ENCODE measurements at regions of chr11 and their contacts with region 1.

Region 1: DNA sequence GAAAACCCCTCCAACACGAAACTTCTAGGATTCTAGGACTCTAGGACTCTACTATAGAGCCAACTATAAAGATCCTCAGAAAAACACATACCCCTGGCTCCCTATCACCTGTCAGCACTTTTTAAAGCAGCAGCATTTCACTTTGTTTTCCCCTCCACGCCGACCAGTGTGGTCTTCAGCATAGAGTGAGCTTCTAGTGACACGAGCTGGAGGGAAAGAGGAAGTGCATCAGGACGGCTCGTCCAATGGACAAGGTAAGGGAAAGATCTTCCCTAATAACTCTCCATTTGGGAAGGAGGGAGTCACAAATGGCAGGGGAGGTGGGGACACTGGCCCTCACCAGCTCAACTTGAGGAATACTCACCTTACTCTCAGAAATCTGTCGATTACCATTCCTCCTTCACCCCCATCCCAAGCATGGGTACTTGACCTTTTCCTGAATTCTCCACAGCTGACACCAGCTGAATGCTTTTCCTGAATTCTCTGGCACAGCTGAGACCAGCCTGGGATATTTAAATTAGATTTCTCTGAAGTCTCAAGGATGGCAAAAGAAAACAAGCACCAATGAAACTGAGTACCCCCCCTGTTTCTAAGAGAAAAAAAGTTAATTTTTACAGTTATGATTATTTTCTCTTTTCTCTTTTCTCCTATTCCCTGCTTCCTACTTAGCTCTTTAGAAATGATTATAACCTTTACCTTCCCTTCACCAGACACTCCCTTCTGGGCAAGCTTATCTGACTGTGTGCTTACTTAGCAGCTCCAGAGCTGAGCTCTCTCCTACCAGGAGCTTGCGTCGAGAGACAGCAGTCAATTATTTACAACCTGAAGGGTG is 33.3 kb upstream of the NNMT start:
- DNase-seq: no peak
- H3K4me3 ChIP-seq: no peak overlapping the region
- H3K27ac ChIP-seq: no peak overlapping the region
- H3K4me1 ChIP-seq: peaks cover 4 to 46% (median 38%) of the 10 kb centered on the region in 6 donors
- H3K27me3 ChIP-seq: peaks cover 0 to 32% (median 0%) of the 10 kb centered on the region in 7 donors
- CTCF ChIP-seq: peak; percentile 18 to 72 (median 63)
- POLR2A ChIP-seq: no peak

Region 2: GRCh38 chr11:113896156-113896879 is 366.6 kb before region 1 on chr11:
- intact Hi-C with region 1: loop called (anchors 5 kb)
- DNase-seq: no peak
- H3K4me3 ChIP-seq: no peak overlapping the region
- H3K27ac ChIP-seq: no peak overlapping the region
- H3K4me1 ChIP-seq: peaks cover 0 to 7% (median 1%) of the 10 kb centered on the region in 6 donors
- H3K27me3 ChIP-seq: no peaks in the 10 kb centered on the region
- CTCF ChIP-seq: peak; percentile 56 to 82 (median 72)
- POLR2A ChIP-seq: no peak

Region 3: GRCh38 chr11:113994077-113994954 is 268.6 kb before region 1 on chr11:
- intact Hi-C with region 1: loop called (anchors 5 kb)
- DNase-seq: peak; percentile 73
- H3K4me3 ChIP-seq: no peak overlapping the region
- H3K27ac ChIP-seq: no peak overlapping the region
- H3K4me1 ChIP-seq: peaks cover 0 to 7% (median 0%) of the 10 kb centered on the region in 6 donors
- H3K27me3 ChIP-seq: peaks cover 0 to 73% (median 0%) of the 10 kb centered on the region in 7 donors
- CTCF ChIP-seq: peak; percentile 37 to 86 (median 68)
- POLR2A ChIP-seq: no peak

Region 4: DNA sequence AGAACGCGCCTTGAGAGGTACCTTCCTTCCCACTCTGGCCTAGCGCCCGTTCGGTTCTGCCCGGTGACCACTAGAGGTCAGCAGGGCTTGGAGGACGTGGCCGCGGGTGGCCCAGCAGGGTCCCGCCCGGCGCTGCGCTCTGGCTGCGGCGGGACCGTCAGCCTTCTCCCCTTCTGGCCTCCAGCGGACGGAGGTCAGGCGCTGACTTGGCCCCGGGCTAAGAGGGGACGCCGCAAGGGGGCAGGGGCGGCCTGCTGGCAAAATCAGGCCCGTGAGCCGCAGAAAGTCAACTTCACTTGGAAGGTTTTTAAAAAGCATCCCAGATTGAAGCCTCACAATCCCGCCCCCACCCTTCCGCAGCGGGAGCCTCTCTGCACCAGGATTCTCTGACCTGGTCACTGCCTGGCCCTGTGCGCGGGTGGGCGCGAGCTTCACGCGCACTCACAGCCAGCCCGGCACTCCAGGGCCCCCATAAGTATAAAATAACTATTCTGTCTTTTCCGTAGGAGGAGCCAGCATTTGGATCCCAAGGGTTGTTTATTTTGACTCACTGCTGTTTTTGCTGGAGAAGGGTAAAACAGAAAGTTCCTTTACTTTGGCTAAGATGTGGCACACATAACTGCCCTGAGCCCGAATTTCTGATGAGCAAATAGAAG is 226.6 kb before region 1 on chr11:
- intact Hi-C with region 1: loop called (anchors 2 kb)
- DNase-seq: peak; percentile 94
- H3K4me3 ChIP-seq: peak overlapping the region in 7 of 8 donors; percentile 5 to 45 (median 20)
- H3K27ac ChIP-seq: peak overlapping the region in 6 of 8 donors; percentile 5 to 41 (median 28)
- H3K4me1 ChIP-seq: peaks cover 5 to 19% (median 11%) of the 10 kb centered on the region in 6 donors
- H3K27me3 ChIP-seq: peaks cover 0 to 10% (median 0%) of the 10 kb centered on the region in 7 donors
- CTCF ChIP-seq: peak; percentile 83 to 93 (median 90)
- POLR2A ChIP-seq: no peak

Region 5: GRCh38 chr11:114159802-114160632 is 102.9 kb before region 1 on chr11:
- intact Hi-C with region 1: no loop called
- DNase-seq: peak; percentile 99
- H3K4me3 ChIP-seq: peak overlapping the region in 2 of 8 donors; percentile 8 to 42
- H3K27ac ChIP-seq: peak overlapping the region; percentile 63 to 92 (median 89)
- H3K4me1 ChIP-seq: peaks cover 48 to 100% (median 94%) of the 10 kb centered on the region in 6 donors
- H3K27me3 ChIP-seq: no peaks in the 10 kb centered on the region
- CTCF ChIP-seq: peak in 4 of 11 experiments; percentile 0 to 27 (median 15)
- POLR2A ChIP-seq: peak in 2 of 3 donors; percentile 3 to 29

Region 6: DNA sequence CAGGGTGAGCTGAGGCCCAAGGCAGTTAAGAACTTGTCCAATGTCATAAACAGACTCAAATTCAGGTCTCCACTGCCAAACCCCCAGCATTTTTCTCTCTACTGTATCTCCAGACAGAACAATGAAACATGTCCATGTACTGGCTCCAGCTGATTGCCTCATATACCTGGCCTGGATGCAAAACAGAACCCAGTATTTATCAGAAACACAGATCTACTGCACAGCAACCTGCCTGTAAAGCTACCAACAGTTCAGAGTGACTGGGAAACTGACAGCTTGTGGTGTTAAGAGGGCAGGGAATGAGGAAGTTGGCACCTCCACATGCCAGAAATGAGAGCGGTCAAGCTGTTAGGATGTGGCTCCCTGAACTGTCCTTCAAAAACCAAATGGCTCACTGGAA is 95.8 kb after region 1 on chr11:
- intact Hi-C with region 1: no loop called
- DNase-seq: no peak
- H3K4me3 ChIP-seq: no peak overlapping the region
- H3K27ac ChIP-seq: no peak overlapping the region
- H3K4me1 ChIP-seq: no peaks in the 10 kb centered on the region
- H3K27me3 ChIP-seq: no peaks in the 10 kb centered on the region
- CTCF ChIP-seq: no peak
- POLR2A ChIP-seq: no peak